ENCODE measurements at regions of chr9 and their contacts with region 1.

Region 1: DNA sequence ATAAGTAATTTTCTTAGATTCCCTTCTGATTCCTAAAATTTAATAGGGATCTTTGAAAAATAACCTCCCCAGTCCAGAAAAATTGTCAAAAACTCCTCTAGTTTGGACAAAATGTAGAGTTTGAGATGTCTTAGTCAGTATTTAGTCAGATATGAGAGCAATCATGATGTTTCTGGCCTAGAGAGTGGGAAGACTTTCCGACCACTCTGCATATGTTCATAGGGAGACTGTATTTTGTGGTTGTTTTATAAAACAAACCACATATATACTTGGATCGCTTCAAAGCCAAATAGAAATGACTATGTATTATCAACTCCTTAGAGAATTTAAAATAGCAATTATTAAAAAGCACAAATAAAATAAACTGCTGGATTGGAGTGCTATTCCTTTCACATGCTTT is 15.8 kb downstream of the ZFAND5 start:
- DNase-seq: no peak
- H3K4me3 ChIP-seq: no peak overlapping the region
- H3K4me3 Mint-ChIP-seq: no peak overlapping the region
- H3K27ac ChIP-seq: no peak overlapping the region
- H3K27ac Mint-ChIP-seq: no peak overlapping the region
- H3K4me1 ChIP-seq: peaks cover 0 to under 1% of the 10 kb centered on the region in 2 donors
- H3K4me1 Mint-ChIP-seq: peaks cover 4% of the 10 kb centered on the region
- H3K27me3 ChIP-seq: no peaks in the 10 kb centered on the region
- H3K27me3 Mint-ChIP-seq: peaks cover 0 to 6% (median 0%) of the 10 kb centered on the region in 3 donors
- CTCF ChIP-seq: no peak

Region 2: DNA sequence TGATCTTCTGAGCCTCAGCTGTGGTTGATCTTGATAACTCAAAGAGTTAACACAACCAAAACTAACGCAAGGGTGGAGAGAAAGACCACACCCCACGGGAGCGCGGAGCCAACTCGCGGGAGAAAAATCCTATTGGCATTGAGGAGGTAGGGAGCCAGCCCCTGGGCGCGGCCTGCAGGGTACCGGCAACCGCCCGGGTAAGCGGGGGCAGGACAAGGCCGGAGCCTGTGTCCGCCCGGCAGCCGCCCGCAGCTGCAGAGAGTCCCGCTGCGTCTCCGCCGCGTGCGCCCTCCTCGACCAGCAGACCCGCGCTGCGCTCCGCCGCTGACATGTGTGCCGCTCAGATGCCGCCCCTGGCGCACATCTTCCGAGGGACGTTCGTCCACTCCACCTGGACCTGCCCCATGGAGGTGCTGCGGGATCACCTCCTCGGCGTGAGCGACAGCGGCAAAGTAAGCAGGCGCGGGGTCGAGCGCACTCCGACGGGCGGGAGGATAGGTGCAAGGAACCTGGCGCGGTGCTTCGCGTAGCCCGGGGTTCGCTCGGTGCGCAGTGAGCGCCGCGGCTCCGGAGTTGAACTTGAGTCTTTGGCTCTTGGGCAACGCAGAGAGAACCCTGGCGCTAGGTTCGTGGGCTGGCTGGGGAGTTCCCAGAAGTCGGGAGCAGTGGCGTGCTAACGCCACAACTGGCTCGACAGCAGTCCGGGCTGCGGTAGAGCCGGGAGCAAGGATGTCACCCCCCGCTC is 199.8 kb before region 1 on chr9 and contains the start of gene GDA:
- intact Hi-C with region 1: no loop called
- DNase-seq: no peak
- H3K4me3 ChIP-seq: no peak within 1 kb of the TSS
- H3K4me3 Mint-ChIP-seq: peak within 1 kb of the TSS; percentile 41 to 86
- H3K27ac ChIP-seq: no peak within 1 kb of the TSS
- H3K27ac Mint-ChIP-seq: no peak within 1 kb of the TSS
- H3K4me1 ChIP-seq: peaks cover 5 to 7% of the 10 kb centered on the region in 2 donors
- H3K4me1 Mint-ChIP-seq: peaks cover 9% of the 10 kb centered on the region
- H3K27me3 ChIP-seq: peaks cover 38 to 52% of the 10 kb centered on the region in 2 donors
- H3K27me3 Mint-ChIP-seq: peaks cover 47 to 56% (median 48%) of the 10 kb centered on the region in 3 donors
- CTCF ChIP-seq: no peak
- polyA plus RNA-seq, gene GDA: not detected

Region 3: DNA sequence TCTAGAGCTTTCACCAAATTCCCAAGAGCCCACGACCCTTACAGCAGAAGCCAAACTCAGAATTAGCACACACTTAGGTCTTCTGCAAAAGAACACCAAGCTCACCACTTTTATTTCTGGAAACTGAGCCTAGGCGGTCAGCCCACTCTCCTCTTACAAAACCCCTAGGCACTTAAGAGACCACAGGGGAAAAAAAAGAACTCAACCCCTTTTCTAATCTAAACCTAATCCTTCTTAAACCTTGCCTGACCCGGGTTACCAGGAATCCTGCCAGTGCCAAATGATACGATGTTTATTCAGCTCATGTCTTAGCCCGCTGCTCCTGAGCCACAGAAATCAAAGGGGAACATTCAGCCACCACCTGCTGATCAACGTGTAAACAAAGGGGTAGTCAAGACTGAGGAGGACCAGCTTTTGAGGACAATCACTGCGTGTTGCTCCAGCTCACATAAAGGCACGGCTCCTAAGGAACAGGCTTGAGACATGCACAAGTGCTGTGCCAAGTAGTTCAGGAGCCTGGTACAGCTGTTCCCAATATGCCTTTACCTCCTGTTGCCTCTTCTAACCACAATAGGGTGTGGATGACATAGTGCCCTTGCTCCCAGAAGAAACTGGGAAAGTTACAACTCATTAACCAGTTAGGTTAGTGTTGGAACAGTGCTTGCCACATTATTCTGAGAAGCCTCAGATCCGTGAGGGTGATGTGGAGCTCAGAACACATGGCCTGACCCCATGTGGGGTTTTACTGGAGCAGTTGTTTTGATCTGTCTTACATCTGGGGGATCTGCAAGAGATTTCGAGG is 33.5 kb before region 1 on chr9:
- intact Hi-C with region 1: loop called in 1 of 2 experiments (anchors 5 kb)
- DNase-seq: no peak
- H3K4me3 ChIP-seq: no peak overlapping the region
- H3K4me3 Mint-ChIP-seq: peak overlapping the region in 1 of 2 donors; percentile 7
- H3K27ac ChIP-seq: peak overlapping the region in 1 of 2 donors; percentile 57
- H3K27ac Mint-ChIP-seq: peak overlapping the region; percentile 10 to 83 (median 59)
- H3K4me1 ChIP-seq: peaks cover 48 to 53% of the 10 kb centered on the region in 2 donors
- H3K4me1 Mint-ChIP-seq: peaks cover 60% of the 10 kb centered on the region
- H3K27me3 ChIP-seq: no peaks in the 10 kb centered on the region
- H3K27me3 Mint-ChIP-seq: peaks cover 0 to 1% (median 0%) of the 10 kb centered on the region in 3 donors
- CTCF ChIP-seq: no peak

Measured in CD14-positive monocyte (primary cell).